ENCODE measurements at regions of chr20 and their contacts with region 1.

Region 1: GRCh38 chr20:46022411-46023147 is 6.4 kb upstream of the SLC12A5 start:
- DNase-seq: peak; percentile 46 to 84 (median 60)
- ATAC-seq: peak in 3 of 4 donors; percentile 54 to 73 (median 55)
- H3K4me3 ChIP-seq: peak overlapping the region in 5 of 12 donors; percentile 7 to 59 (median 15)
- H3K27ac ChIP-seq: no peak overlapping the region
- H3K4me1 ChIP-seq: peaks cover 0 to 21% (median 7%) of the 10 kb centered on the region in 12 donors
- H3K27me3 ChIP-seq: peaks cover 9 to 94% (median 51%) of the 10 kb centered on the region in 9 donors
- CTCF ChIP-seq: peak; percentile 47 to 72 (median 64)
- POLR2A ChIP-seq: no peak

Region 2: GRCh38 chr20:45392733-45393132 is 629.8 kb before region 1 on chr20:
- intact Hi-C with region 1: no loop called
- DNase-seq: no peak
- ATAC-seq: peak in 1 of 4 donors; percentile 42
- H3K4me3 ChIP-seq: no peak overlapping the region
- H3K27ac ChIP-seq: no peak overlapping the region
- H3K4me1 ChIP-seq: no peaks in the 10 kb centered on the region
- H3K27me3 ChIP-seq: no peaks in the 10 kb centered on the region
- CTCF ChIP-seq: peak in 5 of 12 donors; percentile 5 to 33 (median 13)
- POLR2A ChIP-seq: no peak

Region 3: GRCh38 chr20:45842169-45842812 is 180.3 kb before region 1 on chr20:
- intact Hi-C with region 1: no loop called
- DNase-seq: no peak
- ATAC-seq: peak in 3 of 4 donors; percentile 14 to 35 (median 15)
- H3K4me3 ChIP-seq: no peak overlapping the region
- H3K27ac ChIP-seq: peak overlapping the region in 9 of 12 donors; percentile 11 to 66 (median 29)
- H3K4me1 ChIP-seq: peaks cover 0 to 31% (median 19%) of the 10 kb centered on the region in 12 donors
- H3K27me3 ChIP-seq: no peaks in the 10 kb centered on the region
- CTCF ChIP-seq: no peak
- POLR2A ChIP-seq: no peak

Region 4: DNA sequence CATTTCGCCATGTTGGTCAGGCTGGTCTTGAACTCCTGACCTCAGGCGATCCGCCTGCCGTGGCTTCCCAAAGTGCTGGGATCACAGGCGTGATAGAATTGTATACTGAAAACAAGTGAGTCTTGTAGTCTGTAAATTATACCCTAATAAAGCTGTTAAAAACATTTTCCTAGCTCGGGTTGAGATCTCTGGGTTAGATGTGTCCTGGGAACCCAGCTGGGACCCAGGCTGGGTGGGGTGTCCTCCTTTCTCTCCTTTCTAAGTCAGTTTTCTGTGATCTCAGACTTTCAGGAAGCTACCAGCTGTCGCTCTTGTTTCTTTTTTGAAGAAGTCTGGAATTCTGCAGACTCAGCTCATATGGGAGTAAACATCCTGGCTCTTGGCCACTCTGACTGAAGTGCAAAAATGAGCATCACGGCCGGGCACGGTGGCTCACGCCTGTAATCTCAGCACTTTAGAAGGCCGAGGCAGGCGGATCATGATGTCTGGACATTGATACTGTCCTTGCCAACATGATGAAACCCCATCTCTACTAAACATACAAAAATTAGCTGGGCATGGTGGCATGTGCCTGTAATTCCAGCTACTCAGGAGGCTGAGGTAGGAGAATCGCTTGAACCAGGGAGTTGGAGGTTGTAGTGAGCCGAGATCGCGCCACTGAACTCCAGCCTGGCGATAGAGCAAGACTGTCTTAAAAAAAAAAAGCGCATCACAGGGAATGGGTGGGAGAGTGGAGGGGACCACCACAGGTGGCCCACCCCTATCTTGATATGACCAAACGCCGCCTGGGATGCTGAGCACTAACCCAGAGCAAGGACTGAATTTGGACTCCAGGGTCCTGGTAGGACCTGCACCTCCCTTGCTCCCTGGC is 98.0 kb before region 1 on chr20:
- intact Hi-C with region 1: no loop called
- DNase-seq: peak in 4 of 5 donors; percentile 46 to 73 (median 59)
- ATAC-seq: peak; percentile 32 to 64 (median 60)
- H3K4me3 ChIP-seq: peak overlapping the region in 6 of 12 donors; percentile 3 to 22 (median 14)
- H3K27ac ChIP-seq: peak overlapping the region; percentile 56 to 92 (median 70)
- H3K4me1 ChIP-seq: peaks cover 3 to 61% (median 38%) of the 10 kb centered on the region in 12 donors
- H3K27me3 ChIP-seq: no peaks in the 10 kb centered on the region
- CTCF ChIP-seq: no peak
- POLR2A ChIP-seq: no peak

Region 5: DNA sequence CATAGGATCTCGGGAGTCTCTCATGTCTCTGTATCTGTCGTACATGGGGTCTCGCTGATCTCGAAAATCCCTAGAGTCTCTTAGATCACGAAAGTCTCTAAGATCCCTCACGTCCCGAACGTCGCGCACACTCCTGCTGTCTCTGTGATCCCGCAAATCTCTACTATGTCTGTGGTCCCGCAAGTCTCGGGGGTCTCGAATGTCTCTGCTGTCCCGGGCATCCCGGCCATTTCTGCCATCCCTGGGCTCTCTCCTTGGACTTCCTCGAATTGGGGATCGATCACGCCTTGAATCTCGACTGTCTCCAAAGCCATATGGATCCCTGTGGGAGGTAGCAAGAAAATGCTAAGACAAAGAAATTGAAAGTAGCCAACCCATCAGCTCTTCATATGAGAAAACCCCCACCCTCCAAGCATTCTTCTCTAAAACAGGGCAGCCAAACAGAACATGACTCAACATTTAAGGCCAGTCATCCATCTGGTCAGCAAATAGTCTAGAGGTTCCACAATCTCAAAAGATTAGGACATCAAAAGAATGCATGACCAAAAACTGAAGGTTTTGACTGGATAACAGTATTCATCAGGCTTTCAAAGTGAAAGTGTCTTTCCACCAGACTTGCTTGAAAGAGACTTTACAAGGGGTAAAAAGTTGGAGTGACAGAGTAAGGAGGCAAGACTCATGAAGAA is 47.8 kb after region 1 on chr20:
- intact Hi-C with region 1: loop called in 1 of 10 experiments (anchors 10 kb)
- DNase-seq: no peak
- ATAC-seq: no peak
- H3K4me3 ChIP-seq: no peak overlapping the region
- H3K27ac ChIP-seq: no peak overlapping the region
- H3K4me1 ChIP-seq: peaks cover 0 to 12% (median 0%) of the 10 kb centered on the region in 12 donors
- H3K27me3 ChIP-seq: no peaks in the 10 kb centered on the region
- CTCF ChIP-seq: no peak
- POLR2A ChIP-seq: no peak

Region 6: DNA sequence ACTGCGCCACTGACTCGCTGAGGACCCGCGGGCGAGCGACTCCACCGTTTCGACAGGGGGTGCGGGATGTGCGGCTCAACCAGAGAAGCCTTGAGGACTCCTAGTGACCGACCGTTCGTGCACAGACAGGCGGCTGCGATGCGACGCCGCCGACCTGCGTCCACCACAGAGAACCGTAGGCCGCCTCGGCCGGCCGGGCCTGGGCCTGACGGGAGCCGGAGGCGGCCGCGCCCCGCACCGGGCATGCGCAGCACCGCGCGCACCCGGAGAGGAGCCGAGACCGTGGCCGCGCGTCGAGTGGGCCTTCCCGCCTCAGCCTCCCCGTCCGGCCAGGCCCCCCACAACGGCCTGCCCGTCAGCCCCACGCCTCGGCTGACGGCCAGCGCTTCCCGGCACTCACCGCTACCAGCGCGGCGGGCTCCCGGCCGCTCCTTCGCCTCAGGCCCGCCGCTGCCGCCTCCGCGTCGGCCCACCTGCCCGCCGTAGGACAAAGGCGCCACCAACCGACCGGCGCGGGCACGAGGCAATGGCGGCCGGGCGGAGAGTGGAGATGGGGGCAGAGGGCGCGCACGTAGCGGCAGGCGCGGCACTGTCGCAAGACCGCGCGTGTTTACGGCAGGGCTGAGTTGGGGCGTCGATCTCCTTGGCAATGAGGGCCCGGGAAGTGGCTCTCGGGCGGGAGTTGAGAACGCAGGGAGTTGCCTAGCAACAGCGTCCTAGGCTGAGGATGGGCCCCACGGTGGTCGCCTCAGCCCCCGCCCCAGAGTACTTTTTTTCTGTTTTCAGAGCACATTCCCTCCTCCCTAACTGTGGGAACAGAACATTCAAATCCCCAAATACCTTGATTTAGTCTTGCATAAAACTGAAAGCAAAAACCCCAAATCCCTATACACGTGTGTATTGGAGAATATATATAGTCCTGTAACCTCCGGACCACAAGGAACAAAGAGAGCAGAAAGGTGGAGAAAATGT is 67.1 kb after region 1 on chr20 and contains the start of gene NCOA5:
- intact Hi-C with region 1: loop called in 4 of 10 experiments (anchors 5 to 10 kb)
- DNase-seq: peak; percentile 96 to 98 (median 97)
- ATAC-seq: peak; percentile 96 to 98 (median 98)
- H3K4me3 ChIP-seq: peak within 1 kb of the TSS; percentile 52 to 96 (median 86)
- H3K27ac ChIP-seq: peak within 1 kb of the TSS; percentile 94 to 100 (median 98)
- H3K4me1 ChIP-seq: peaks cover 6 to 50% (median 46%) of the 10 kb centered on the region in 12 donors
- H3K27me3 ChIP-seq: no peaks in the 10 kb centered on the region
- CTCF ChIP-seq: peak in 7 of 12 donors; percentile 11 to 56 (median 41)
- POLR2A ChIP-seq: peak in 1 of 2 donors; percentile 70
- total RNA-seq, gene NCOA5: 9.5 to 17.4 (median 12.5) TPM

Region 7: DNA sequence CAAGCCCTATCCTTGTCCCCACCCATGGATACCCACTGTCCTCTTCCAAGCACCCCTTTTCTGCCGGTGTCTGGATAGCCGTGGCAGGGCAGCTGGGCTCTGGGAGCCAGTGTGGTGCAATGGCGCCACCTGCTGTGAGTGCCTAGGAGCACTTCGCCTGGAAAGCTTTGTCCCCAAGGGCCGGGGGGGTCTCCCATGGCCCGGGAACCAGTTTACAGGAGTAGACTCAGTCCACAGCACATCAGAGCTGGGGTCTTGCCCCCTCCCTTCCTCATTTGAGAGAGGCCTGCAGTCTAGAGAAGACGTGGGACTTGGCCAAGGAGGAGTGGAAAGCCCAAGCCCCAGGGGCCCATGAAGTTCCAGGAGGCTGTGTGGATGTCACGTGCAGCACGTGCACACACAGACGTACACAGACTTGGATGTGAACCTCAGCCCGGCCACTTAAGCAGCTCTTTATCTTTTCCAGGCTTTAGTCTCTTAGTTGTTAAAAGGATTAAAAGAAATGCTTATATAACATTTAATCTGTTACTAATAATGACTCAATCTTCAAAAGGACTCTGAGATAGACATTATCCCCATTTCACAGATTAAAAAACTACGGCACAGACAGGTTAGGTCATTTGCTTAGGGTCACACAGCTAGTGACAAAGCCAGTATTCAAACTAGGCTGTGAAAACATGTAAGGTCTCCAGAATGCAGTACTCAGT is 326.6 kb after region 1 on chr20:
- intact Hi-C with region 1: loop called in 4 of 10 experiments (anchors 10 kb)
- DNase-seq: peak; percentile 41 to 81 (median 55)
- ATAC-seq: peak; percentile 47 to 80 (median 71)
- H3K4me3 ChIP-seq: peak overlapping the region in 4 of 12 donors; percentile 14 to 34 (median 20)
- H3K27ac ChIP-seq: peak overlapping the region in 1 of 12 donors; percentile 0
- H3K4me1 ChIP-seq: peaks cover 0 to 22% (median 9%) of the 10 kb centered on the region in 12 donors
- H3K27me3 ChIP-seq: no peaks in the 10 kb centered on the region
- CTCF ChIP-seq: peak; percentile 65 to 83 (median 77)
- POLR2A ChIP-seq: no peak